Left ventricle myocardium inferior (tissue), 1 donor: ENCODE measurements at regions of chr10 and their contacts with region 1.

Region 1: GRCh38 chr10:103244663-103245271 is 920 bp upstream of the RPEL1 start:
- DNase-seq: peak; percentile 60
- H3K4me3 ChIP-seq: no peak overlapping the region
- H3K27ac ChIP-seq: no peak overlapping the region
- H3K4me1 ChIP-seq: peaks cover 8% of the 10 kb centered on the region
- H3K27me3 ChIP-seq: no peaks in the 10 kb centered on the region
- CTCF ChIP-seq: peak; percentile 90

Region 2: DNA sequence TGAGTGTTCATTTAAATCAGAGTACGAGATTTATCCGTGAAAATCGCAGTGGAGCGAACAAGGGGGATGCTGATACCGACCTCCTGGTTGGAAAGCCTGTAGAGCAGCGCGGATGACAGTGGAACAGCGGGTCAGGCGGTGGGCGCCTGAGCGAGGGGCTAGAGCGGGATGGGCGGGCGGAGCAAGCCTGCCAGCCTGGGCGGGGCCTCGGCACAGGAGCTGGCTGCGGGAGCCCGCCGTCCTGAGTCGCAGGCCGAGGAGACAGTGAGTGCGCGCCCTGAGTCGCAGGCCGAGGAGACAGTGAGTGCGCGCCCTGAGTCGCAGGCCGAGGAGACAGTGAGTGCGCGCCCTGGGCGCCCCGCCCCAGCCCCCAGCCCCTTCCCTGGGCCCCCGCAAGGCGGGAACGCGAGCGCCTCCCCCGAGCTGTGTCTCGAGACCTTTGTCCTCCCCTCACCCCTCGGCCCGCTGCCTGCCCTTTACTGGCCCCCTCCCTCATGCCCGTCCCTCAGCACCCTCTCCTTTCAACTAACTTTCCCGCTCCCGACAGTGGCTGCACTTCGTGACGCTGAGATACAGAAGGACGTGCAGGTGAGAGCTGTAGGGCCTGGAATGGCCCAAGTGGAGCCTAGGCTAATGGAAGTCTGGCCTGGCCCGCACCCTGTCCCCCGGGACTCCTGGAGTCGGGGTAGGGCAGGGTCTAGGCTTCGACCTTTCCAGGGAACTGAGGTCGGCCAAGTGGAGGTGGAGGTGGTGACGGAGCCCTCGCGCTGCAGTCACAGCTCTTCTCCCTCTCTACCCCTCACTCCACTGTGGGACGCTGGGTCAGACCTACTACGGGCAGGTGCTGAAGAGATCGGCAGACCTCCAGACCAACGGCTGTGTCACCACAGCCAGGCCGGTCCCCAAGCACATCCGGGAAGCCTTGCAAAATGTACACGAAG is 375.2 kb before region 1 on chr10 and contains the start of gene AS3MT:
- intact Hi-C with region 1: no loop called
- DNase-seq: peak; percentile 31
- H3K4me3 ChIP-seq: peak within 1 kb of the TSS; percentile 68
- H3K27ac ChIP-seq: peak within 1 kb of the TSS; percentile 65
- H3K4me1 ChIP-seq: peaks cover 16% of the 10 kb centered on the region
- H3K27me3 ChIP-seq: peaks cover 6% of the 10 kb centered on the region
- CTCF ChIP-seq: no peak
- total RNA-seq, gene AS3MT: 17.2 TPM

Region 3: DNA sequence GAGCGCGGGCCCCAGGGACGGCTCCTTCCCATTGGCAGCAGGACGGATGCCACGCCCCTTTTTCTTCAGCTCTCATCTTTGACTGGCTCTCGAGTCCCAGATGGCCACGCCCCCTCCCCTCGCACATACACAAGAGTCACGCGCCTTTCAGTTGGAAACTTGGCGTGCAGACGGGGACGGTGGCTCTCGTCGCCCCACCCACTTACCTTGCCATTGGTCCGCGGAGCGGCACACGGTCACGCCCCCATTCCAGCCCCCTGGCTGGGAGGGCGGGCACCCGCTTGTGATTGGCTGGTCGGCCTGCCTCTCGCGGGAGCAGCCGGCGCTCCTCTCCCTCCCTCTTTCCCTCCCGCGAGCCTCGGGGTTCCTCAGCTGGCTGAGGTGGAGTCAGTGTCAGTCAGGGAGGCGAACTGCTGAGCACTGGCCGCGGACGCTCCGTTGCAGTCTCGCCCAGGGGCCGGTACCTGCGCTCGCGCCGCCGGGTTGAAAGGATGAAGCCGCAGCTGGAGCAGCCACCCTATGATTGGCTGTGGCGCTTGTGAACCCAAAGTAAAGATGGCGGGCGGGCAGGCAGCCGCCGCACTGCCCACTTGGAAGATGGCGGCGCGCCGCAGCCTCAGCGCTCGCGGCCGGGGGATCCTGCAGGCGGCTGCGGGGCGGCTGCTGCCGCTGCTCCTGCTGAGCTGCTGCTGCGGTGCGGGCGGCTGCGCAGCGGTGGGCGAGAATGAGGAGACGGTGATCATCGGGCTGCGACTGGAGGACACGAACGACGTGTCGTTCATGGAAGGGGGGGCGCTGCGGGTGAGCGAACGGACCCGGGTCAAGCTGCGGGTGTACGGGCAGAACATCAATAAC is 326.6 kb before region 1 on chr10 and contains the start of gene CNNM2:
- intact Hi-C with region 1: loop called (anchors 5 kb)
- DNase-seq: peak; percentile 100
- H3K4me3 ChIP-seq: peak within 1 kb of the TSS; percentile 98
- H3K27ac ChIP-seq: peak within 1 kb of the TSS; percentile 88
- H3K4me1 ChIP-seq: peaks cover 63% of the 10 kb centered on the region
- H3K27me3 ChIP-seq: no peaks in the 10 kb centered on the region
- CTCF ChIP-seq: no peak
- total RNA-seq, gene CNNM2: 3.3 TPM

Region 4: GRCh38 chr10:103111031-103111917 is 133.5 kb before region 1 on chr10:
- intact Hi-C with region 1: loop called (anchors 5 kb)
- DNase-seq: no peak
- H3K4me3 ChIP-seq: peak overlapping the region; percentile 28
- H3K27ac ChIP-seq: peak overlapping the region; percentile 85
- H3K4me1 ChIP-seq: peaks cover 75% of the 10 kb centered on the region
- H3K27me3 ChIP-seq: no peaks in the 10 kb centered on the region
- CTCF ChIP-seq: peak; percentile 26